ENCODE measurements at regions of chr6 and their contacts with region 1.

Region 1: DNA sequence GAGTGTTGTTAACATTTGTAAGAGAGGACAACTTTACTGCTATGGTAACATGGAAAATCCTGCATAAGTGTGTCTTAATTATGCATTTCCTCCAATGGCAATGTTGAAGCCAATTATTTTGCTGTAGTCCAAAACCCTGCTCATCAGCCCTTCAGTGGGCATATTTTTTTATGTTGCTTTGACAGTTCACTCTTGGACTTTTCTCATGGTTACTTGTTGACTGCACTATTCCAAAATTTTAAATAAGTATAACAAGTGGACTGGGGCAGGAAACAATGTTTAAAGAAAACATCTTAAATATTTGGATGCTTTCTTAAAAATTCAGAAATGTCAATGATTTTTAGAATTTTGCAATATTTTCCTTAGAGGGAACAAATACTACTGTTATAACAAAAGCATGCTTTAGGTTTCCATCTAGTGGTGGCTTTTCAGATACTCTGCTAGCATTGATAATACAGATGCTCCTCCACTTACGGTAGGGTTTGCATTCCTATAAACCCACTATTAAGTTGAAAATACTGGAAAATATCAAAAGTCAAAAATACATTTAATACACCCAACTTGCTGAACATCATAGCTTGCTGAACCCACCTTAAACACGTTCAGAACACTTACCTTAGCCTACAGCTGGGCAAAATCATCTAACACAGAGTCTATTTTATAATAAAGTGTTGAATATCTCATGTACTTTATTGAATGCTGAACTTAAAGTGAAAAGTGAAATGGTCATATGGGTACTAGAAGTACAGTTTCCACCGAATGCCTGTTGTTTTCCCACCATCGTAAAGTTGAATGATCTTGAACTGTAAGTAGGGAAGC is 86.4 kb downstream of the ADGRG6 start:
- DNase-seq: no peak
- H3K4me3 Mint-ChIP-seq: no peak overlapping the region
- H3K27ac Mint-ChIP-seq: no peak overlapping the region
- H3K4me1 Mint-ChIP-seq: no peaks in the 10 kb centered on the region
- H3K27me3 Mint-ChIP-seq: no peaks in the 10 kb centered on the region

Region 2: DNA sequence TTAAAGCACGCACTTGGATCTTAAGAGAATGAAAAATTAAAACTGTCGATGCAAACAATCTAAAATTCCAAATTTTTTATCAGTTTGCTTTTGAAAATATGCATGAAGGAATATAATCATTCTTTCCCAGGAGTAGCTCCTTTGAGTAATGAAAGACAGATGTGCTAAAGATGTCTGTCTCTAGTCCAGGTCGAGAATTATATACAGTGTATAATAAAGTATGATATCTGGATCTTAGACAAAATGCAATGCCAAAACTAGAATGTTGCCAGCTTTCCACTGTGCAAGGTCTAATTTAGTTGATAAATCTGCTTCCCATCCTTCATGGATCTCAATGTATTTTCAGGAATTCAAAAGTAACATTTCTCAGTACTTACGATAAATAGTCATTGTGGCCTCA is 151.5 kb before region 1 on chr6:
- CTCF ChIA-PET with region 1: interaction called, 4 read pairs
- intact Hi-C with region 1: loop called (anchors 1 kb)
- DNase-seq: no peak
- H3K4me3 Mint-ChIP-seq: no peak overlapping the region
- H3K27ac Mint-ChIP-seq: no peak overlapping the region
- H3K4me1 Mint-ChIP-seq: peaks cover 13% of the 10 kb centered on the region
- H3K27me3 Mint-ChIP-seq: no peaks in the 10 kb centered on the region

Region 3: GRCh38 chr6:142301651-142302370 is 86.4 kb before region 1 on chr6 and contains the start of gene ADGRG6:
- CTCF ChIA-PET with region 1: no interaction called
- intact Hi-C with region 1: loop called (anchors 2 kb)
- DNase-seq: peak; percentile 60
- H3K4me3 Mint-ChIP-seq: peak within 1 kb of the TSS; percentile 82
- H3K27ac Mint-ChIP-seq: no peak within 1 kb of the TSS
- H3K4me1 Mint-ChIP-seq: peaks cover 3% of the 10 kb centered on the region
- H3K27me3 Mint-ChIP-seq: peaks cover 15% of the 10 kb centered on the region
- total RNA-seq, gene ADGRG6: 0.69 to 0.86 TPM

Region 4: DNA sequence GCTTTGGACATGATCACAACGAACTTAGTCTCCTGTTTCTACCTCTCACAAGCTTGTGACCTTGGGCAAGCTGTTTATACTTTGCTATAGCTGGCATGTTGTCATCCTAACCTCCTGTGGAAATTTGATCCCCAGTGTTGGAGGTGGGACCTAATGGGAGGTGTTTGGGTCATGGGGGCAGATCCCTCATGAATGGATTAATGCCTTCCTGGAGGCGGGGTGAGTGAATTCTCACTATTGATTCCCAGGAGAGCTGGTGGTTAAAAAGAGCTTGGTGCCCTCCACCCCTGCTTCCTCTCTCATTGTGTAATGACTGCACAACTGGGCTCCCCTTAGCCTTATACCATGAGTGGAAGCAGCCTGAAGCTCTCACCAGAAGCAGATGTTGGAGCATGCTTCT is 327.9 kb after region 1 on chr6:
- CTCF ChIA-PET with region 1: no interaction called
- intact Hi-C with region 1: no loop called
- DNase-seq: no peak
- H3K4me3 Mint-ChIP-seq: no peak overlapping the region
- H3K27ac Mint-ChIP-seq: no peak overlapping the region
- H3K4me1 Mint-ChIP-seq: peaks cover 9% of the 10 kb centered on the region
- H3K27me3 Mint-ChIP-seq: no peaks in the 10 kb centered on the region

Region 5: DNA sequence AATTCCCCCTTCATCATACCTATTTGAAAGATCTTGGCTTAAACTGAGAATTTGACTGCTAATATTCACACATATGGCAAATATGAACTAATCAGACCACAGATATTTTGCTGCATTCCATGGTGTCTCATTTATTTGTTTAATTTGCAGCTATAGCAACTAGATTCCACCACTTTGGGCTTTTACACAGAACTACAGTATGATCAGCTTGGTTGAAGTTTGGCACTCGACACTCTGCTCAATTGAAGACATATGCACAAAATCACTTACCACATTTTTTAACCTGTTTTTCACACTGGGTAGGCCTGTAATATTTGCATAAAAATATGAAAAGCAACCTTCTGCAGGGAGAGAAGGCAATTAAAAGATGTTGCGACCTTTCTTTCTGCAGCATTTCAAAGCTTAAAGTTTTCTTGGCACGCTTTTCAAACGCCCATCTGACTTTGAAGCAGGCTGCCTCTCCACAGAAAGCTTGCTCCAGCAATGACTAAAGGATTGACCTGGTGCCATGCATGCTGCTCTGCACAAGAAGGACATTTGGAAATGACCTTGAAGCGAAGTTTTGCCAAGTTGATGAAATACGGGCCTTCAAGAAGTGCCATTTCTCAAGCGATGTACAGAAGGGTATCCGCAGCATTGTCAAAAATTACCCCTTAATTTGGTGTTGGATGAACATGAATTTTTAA is 799.2 kb after region 1 on chr6:
- CTCF ChIA-PET with region 1: no interaction called
- intact Hi-C with region 1: no loop called
- DNase-seq: no peak
- H3K4me3 Mint-ChIP-seq: no peak overlapping the region
- H3K27ac Mint-ChIP-seq: no peak overlapping the region
- H3K4me1 Mint-ChIP-seq: no peaks in the 10 kb centered on the region
- H3K27me3 Mint-ChIP-seq: no peaks in the 10 kb centered on the region

Measured in activated naive CD4-positive, alpha-beta T cell treated with anti-CD3 and anti-CD28 coated beads for 36 hours (primary cell).